ENCODE measurements at regions of chr6 and their contacts with region 1.

Region 1: GRCh38 chr6:13413900-13414555 is 73.4 kb downstream of the GFOD1 start:
- DNase-seq: no peak
- ATAC-seq: no peak; the same call in 2 of the 3 replicates
- H3K4me3 ChIP-seq: peak overlapping the region in 1 of 3 experiments; percentile 45; a peak in 1 of 6 replicates
- H3K27ac ChIP-seq: peak overlapping the region; percentile 58
- H3K4me1 ChIP-seq: peaks cover 80% of the 10 kb centered on the region
- H3K27me3 ChIP-seq: no peaks in the 10 kb centered on the region
- CTCF ChIP-seq: no peak
- EP300 ChIP-seq: no peak; a peak in 1 of 4 replicates
- POLR2A ChIP-seq: no peak
- RAD21 ChIP-seq: no peak

Region 2: GRCh38 chr6:12751694-12752325 is 662.2 kb before region 1 on chr6:
- CTCF ChIA-PET with region 1: no interaction called
- POLR2A ChIA-PET with region 1: no interaction called
- in situ Hi-C with region 1: no loop called
- intact Hi-C with region 1: no loop called
- DNase-seq: peak; percentile 35
- ATAC-seq: peak; percentile 78
- H3K4me3 ChIP-seq: no peak overlapping the region
- H3K27ac ChIP-seq: no peak overlapping the region
- H3K4me1 ChIP-seq: no peaks in the 10 kb centered on the region
- H3K27me3 ChIP-seq: peaks cover 0 to 3% of the 10 kb centered on the region in 2 experiments; a peak in 2 of 5 replicates
- CTCF ChIP-seq: no peak
- EP300 ChIP-seq: no peak
- POLR2A ChIP-seq: no peak
- RAD21 ChIP-seq: no peak

Region 3: DNA sequence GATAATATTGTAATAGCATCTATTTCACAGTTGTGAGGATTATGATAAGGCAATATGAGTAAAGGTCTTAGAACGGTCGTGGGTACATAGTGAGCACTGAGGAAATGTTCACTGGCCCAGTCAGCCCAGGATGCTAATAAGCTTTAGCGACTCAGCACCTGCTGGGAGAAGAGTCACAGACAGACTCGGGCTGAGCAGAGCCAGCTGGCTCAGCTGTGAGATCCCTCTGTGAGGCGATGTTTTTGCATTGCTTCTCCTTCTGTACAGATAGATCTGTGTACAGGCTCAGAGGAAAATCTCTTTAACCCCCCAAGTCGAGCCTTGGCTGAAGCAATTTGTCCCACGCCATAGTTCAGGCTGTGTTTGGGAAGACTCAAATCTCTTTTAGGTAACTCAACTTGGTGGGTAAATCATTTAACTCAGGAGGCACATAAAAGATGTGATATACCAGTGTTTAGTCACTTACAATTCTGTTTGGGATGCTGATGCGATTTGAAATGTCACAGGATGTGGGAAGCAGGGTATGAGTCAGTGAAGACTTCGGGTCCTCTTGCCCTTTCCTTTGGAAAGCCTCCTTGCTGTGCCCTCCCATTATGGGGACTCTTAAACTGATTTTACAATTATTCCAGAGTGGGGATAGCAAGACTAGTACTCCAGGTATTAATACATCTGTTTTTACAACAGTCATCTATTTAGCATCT is 644.3 kb before region 1 on chr6:
- CTCF ChIA-PET with region 1: no interaction called
- POLR2A ChIA-PET with region 1: no interaction called
- in situ Hi-C with region 1: no loop called
- intact Hi-C with region 1: no loop called
- DNase-seq: no peak
- ATAC-seq: no peak
- H3K4me3 ChIP-seq: no peak overlapping the region
- H3K27ac ChIP-seq: no peak overlapping the region
- H3K4me1 ChIP-seq: no peaks in the 10 kb centered on the region
- H3K27me3 ChIP-seq: no peaks in the 10 kb centered on the region
- CTCF ChIP-seq: no peak
- EP300 ChIP-seq: no peak
- POLR2A ChIP-seq: no peak
- RAD21 ChIP-seq: no peak

Region 4: DNA sequence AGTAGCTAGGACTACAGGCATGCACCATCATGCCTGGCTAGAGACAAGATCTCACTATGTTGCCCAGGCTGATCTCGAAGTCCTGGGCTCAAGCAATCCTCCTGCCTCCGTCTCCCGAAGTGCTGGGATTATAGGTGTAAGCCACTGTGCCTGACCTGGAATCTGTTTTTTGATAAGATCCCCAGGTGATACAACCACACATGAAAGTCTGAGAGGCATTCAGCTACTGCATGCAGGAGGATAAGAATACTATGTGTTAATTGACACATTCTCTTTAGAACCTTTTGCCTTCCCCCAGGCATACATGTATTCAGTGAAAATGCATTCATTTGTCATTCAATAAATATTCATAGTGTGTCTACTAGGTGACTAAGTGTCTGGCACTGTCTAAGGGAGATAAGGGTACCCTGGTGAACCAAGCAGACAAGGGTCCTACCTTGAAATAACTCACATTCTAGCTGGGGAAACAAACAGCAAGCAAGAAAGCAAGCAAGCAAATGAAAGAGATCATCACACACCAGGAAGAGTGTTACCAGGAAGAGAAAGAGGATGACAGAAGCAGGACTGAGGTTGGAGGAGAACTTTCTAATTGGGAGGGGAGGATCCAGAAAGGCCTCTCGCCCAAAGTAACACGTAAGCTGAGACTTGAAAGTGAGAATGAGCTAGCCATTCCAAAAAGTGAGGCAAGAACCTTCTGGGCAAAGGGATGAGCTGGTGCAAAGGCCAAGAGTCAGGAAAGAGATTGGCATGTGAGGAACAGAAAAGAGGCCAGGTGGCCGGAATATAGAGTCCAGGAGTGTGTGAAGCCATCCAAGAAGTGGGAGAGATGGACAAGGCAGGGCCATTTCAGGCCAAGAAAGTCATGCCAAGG is 66.8 kb after region 1 on chr6:
- CTCF ChIA-PET with region 1: no interaction called
- POLR2A ChIA-PET with region 1: interaction called, 25 read pairs
- in situ Hi-C with region 1: loop called (anchors 5 kb)
- intact Hi-C with region 1: no loop called
- DNase-seq: no peak
- ATAC-seq: no peak
- H3K4me3 ChIP-seq: no peak overlapping the region
- H3K27ac ChIP-seq: no peak overlapping the region
- H3K4me1 ChIP-seq: peaks cover 52% of the 10 kb centered on the region
- H3K27me3 ChIP-seq: no peaks in the 10 kb centered on the region
- CTCF ChIP-seq: no peak
- EP300 ChIP-seq: no peak
- POLR2A ChIP-seq: no peak
- RAD21 ChIP-seq: no peak

Region 5: DNA sequence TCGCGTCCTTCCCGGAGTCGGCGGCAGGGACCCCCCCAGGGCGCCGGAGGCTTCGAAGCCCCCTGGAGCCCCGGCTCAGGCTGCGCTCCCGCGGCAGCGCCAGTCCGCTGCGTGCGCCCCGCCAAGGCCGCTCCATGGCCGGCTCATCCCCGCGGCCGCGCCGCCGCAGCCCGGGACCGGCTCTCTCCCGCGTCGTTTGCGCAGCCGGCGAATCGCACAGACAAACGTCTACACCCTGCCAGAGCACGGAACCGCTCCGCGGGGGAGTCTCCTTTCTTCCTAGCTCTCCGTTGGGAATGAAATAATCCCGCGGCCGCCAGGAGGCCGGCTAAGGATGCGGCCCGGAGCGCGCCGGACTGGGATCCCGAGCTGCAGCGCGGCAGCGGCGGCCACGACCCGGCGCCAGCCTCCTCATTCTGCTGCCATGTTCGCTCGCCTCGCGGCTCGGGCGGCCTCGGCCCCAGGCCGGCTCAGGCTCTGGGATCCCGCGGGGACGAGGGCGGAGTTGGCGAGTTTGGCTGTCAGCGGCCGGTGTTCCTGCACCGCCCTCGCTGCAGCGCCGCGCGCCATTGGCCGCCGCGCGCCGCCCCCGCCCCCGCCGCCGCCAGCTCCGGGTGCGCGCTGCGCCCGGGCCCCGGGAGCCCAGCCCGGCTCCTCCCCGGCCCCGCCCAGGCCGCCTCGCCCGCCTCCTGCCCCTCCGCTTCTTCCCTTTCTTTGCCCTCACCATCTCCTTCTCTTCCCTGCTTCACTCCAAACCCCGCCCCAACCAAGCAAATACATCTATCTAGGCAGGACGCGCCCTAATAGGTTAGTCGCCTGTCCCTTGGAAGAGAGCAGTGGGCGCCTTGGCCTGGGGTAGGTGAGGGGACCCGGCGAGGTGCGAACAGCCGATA is 73.3 kb after region 1 on chr6 and contains the start of gene GFOD1:
- CTCF ChIA-PET with region 1: no interaction called
- POLR2A ChIA-PET with region 1: interaction called, 25 read pairs
- in situ Hi-C with region 1: loop called (anchors 5 kb)
- intact Hi-C with region 1: no loop called
- DNase-seq: peak; percentile 63
- ATAC-seq: peak; percentile 80
- H3K4me3 ChIP-seq: peak within 1 kb of the TSS; percentile 69 to 82 (median 80)
- H3K27ac ChIP-seq: peak within 1 kb of the TSS; percentile 25
- H3K4me1 ChIP-seq: peaks cover 47% of the 10 kb centered on the region
- H3K27me3 ChIP-seq: no peaks in the 10 kb centered on the region; a peak in 1 of 5 replicates
- CTCF ChIP-seq: no peak
- EP300 ChIP-seq: no peak
- POLR2A ChIP-seq: peak; percentile 44 to 70; a peak in 3 of 4 replicates
- RAD21 ChIP-seq: peak; percentile 76
- total RNA-seq, gene GFOD1: 6.4 TPM in 2 replicates